Endothelial cell of umbilical vein (primary cell): ENCODE measurements at regions of chr15 and their contacts with region 1.

Region 1: GRCh38 chr15:59725172-59725486 is 36.0 kb upstream of the BNIP2 start:
- DNase-seq: no peak
- H3K4me3 ChIP-seq: no peak overlapping the region
- H3K27ac ChIP-seq: no peak overlapping the region
- H3K4me1 ChIP-seq: no peaks in the 10 kb centered on the region
- H3K27me3 ChIP-seq: peaks cover 11 to 24% of the 10 kb centered on the region in 2 experiments
- CTCF ChIP-seq: no peak
- POLR2A ChIP-seq: no peak

Region 2: DNA sequence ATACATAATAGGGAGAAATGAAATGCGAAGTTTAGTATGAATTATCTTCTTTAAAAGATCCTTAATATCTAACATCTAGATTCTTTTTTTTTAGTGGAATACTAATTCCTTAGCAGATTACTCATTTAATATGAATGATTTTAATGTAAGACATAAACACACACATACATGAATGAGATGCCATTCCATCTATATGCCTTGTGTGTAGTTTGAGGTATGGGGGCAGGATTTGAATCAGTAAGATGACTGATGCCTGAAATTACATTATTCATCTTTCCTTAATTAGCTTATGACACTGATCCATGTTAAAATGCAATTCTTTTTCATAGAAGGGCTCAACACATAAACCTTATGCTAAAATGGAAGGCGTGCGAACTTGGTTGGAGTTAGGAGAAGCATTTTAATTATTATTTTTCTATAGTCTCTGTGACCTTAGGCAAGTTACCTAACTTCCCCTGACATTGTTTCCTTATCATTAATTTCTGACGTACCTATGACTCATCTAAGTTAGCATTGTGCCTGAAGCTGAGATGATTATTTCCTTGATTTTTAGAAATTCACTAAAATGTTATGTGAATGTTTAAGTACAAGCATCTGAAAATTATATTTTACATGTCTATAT is 25.2 kb before region 1 on chr15:
- CTCF ChIA-PET with region 1: interaction called, 11 read pairs
- POLR2A ChIA-PET with region 1: no interaction called
- dilution Hi-C with region 1: no loop called
- intact Hi-C with region 1: no loop called
- DNase-seq: peak; percentile 69
- H3K4me3 ChIP-seq: no peak overlapping the region
- H3K27ac ChIP-seq: peak overlapping the region; percentile 40
- H3K4me1 ChIP-seq: peaks cover 14% of the 10 kb centered on the region
- H3K27me3 ChIP-seq: no peaks in the 10 kb centered on the region
- CTCF ChIP-seq: no peak
- POLR2A ChIP-seq: no peak

Region 3: DNA sequence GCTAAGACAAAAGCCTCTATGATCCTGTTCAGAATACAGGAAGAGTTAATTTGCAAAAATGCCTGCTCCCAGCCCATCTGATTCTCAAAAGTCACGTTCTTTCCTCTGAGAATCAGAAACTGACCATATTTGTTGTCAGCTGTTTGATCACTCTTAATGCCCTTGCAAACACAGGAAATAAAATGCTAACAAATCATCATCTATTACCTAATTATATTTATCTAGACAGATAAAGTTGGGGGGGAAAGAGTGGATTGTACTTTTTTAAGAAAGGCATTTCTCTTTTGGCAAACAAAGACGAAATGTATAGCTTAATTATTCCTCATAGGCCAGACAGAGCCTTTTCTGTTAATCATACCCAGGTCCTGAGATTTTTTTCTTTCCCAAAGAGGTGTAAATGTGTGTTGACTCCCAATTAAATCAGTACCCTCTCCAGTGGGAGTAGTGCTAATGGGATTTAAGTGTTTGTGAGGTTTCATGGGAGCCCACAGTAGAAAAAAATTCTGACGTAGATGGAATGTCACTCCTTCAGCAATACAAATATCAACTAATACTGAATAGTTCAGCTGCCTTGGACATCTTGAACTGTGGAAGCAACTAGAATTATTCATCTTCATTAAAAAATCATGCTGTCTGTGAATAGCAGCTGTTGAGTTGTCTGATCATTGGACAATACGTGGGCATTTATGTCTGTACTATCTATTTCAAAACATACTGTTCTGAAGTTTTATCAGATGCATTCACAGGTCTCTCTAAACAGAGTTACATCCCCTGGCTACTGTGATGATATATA is 13.5 kb before region 1 on chr15:
- CTCF ChIA-PET with region 1: interaction called, 19 read pairs
- POLR2A ChIA-PET with region 1: no interaction called
- dilution Hi-C with region 1: no loop called
- intact Hi-C with region 1: no loop called
- DNase-seq: no peak
- H3K4me3 ChIP-seq: no peak overlapping the region
- H3K27ac ChIP-seq: no peak overlapping the region
- H3K4me1 ChIP-seq: no peaks in the 10 kb centered on the region
- H3K27me3 ChIP-seq: peaks cover 0 to 4% of the 10 kb centered on the region in 2 experiments
- CTCF ChIP-seq: no peak
- POLR2A ChIP-seq: no peak

Region 4: GRCh38 chr15:59917504-59918157 is 192.5 kb after region 1 on chr15:
- CTCF ChIA-PET with region 1: interaction called, 7 read pairs
- POLR2A ChIA-PET with region 1: no interaction called
- dilution Hi-C with region 1: no loop called
- intact Hi-C with region 1: loop called (anchors 10 kb)
- DNase-seq: peak; percentile 44
- H3K4me3 ChIP-seq: no peak overlapping the region
- H3K27ac ChIP-seq: no peak overlapping the region
- H3K4me1 ChIP-seq: no peaks in the 10 kb centered on the region
- H3K27me3 ChIP-seq: peaks cover 4 to 7% of the 10 kb centered on the region in 2 experiments
- CTCF ChIP-seq: peak; percentile 44 to 57
- POLR2A ChIP-seq: no peak

Region 5: GRCh38 chr15:60128000-60128376 is 402.9 kb after region 1 on chr15:
- CTCF ChIA-PET with region 1: interaction called, 18 read pairs
- POLR2A ChIA-PET with region 1: no interaction called
- dilution Hi-C with region 1: no loop called
- intact Hi-C with region 1: loop called (anchors 5 kb)
- DNase-seq: no peak
- H3K4me3 ChIP-seq: peak overlapping the region; percentile 38 to 92 (median 91)
- H3K27ac ChIP-seq: peak overlapping the region; percentile 16
- H3K4me1 ChIP-seq: peaks cover 5% of the 10 kb centered on the region
- H3K27me3 ChIP-seq: peaks cover 14 to 20% of the 10 kb centered on the region in 2 experiments
- CTCF ChIP-seq: no peak
- POLR2A ChIP-seq: no peak

Region 6: DNA sequence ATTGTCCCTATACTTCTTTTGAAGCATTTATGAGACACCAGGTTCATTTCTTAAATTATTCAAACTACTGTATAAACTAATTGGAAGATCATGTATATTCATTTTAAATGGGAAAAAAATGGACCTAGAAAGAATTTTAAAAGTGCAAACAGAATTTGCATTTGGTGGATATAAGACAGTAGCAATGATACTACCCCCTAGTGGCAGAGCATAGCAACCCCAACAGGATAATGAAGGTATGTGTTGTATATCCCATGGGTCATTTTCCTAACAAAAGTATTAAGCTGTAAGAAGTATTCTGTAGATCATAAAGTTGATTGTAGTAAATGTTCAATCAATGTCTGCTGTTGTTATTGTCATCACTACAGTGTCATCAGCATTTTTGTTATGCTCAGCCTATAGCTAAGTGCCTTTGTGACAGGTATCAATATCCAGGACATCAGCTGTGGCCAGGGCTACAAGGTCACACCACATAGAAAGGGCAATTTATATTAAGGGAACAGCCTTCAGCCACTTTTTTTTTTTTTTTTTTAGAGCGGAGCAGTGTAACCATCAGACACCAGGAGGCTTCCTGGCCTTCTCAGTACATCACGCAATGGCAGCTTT is 454.8 kb after region 1 on chr15:
- CTCF ChIA-PET with region 1: interaction called, 67 read pairs
- POLR2A ChIA-PET with region 1: no interaction called
- dilution Hi-C with region 1: no loop called
- intact Hi-C with region 1: loop called (anchors 2 kb)
- DNase-seq: peak; percentile 44
- H3K4me3 ChIP-seq: no peak overlapping the region
- H3K27ac ChIP-seq: no peak overlapping the region
- H3K4me1 ChIP-seq: no peaks in the 10 kb centered on the region
- H3K27me3 ChIP-seq: peaks cover 2 to 10% of the 10 kb centered on the region in 2 experiments
- CTCF ChIP-seq: peak; percentile 70 to 73
- POLR2A ChIP-seq: no peak

Region 7: GRCh38 chr15:60318216-60318867 is 593.2 kb after region 1 on chr15:
- CTCF ChIA-PET with region 1: interaction called, 12 read pairs
- POLR2A ChIA-PET with region 1: no interaction called
- dilution Hi-C with region 1: no loop called
- intact Hi-C with region 1: no loop called
- DNase-seq: no peak
- H3K4me3 ChIP-seq: no peak overlapping the region
- H3K27ac ChIP-seq: no peak overlapping the region
- H3K4me1 ChIP-seq: no peaks in the 10 kb centered on the region
- H3K27me3 ChIP-seq: peaks cover 21 to 24% of the 10 kb centered on the region in 2 experiments
- CTCF ChIP-seq: no peak
- POLR2A ChIP-seq: no peak